ENCODE measurements at regions of chr13 and their contacts with region 1.

Region 1: GRCh38 chr13:92843549-92843948 is 383.1 kb upstream of the GPC6 start:
- DNase-seq: peak; percentile 69
- ATAC-seq: peak; percentile 39
- H3K4me3 ChIP-seq: no peak overlapping the region
- H3K27ac ChIP-seq: peak overlapping the region; percentile 29; the same call in 1 of the 2 replicates
- H3K4me1 ChIP-seq: peaks cover 2% of the 10 kb centered on the region
- H3K27me3 ChIP-seq: no peaks in the 10 kb centered on the region
- CTCF ChIP-seq: no peak
- POLR2A ChIP-seq: no peak
- RAD21 ChIP-seq: no peak

Region 2: GRCh38 chr13:92804346-92804745 is 39.2 kb before region 1 on chr13:
- CTCF ChIA-PET with region 1: no interaction called
- POLR2A ChIA-PET with region 1: no interaction called
- dilution Hi-C with region 1: no loop called
- in situ Hi-C with region 1: no loop called
- intact Hi-C with region 1: no loop called
- DNase-seq: peak; percentile 64
- ATAC-seq: peak; percentile 30; the same call in 1 of the 2 replicates
- H3K4me3 ChIP-seq: no peak overlapping the region
- H3K27ac ChIP-seq: no peak overlapping the region
- H3K4me1 ChIP-seq: no peaks in the 10 kb centered on the region
- H3K27me3 ChIP-seq: no peaks in the 10 kb centered on the region
- CTCF ChIP-seq: no peak
- POLR2A ChIP-seq: no peak
- RAD21 ChIP-seq: no peak

Region 3: GRCh38 chr13:93118081-93118615 is 274.6 kb after region 1 on chr13:
- CTCF ChIA-PET with region 1: no interaction called
- POLR2A ChIA-PET with region 1: no interaction called
- dilution Hi-C with region 1: no loop called
- in situ Hi-C with region 1: no loop called
- intact Hi-C with region 1: no loop called
- DNase-seq: no peak
- ATAC-seq: no peak
- H3K4me3 ChIP-seq: no peak overlapping the region
- H3K27ac ChIP-seq: no peak overlapping the region
- H3K4me1 ChIP-seq: no peaks in the 10 kb centered on the region
- H3K27me3 ChIP-seq: peaks cover 2% of the 10 kb centered on the region; the same call in 1 of the 2 replicates
- CTCF ChIP-seq: no peak
- POLR2A ChIP-seq: no peak
- RAD21 ChIP-seq: no peak

Region 4: DNA sequence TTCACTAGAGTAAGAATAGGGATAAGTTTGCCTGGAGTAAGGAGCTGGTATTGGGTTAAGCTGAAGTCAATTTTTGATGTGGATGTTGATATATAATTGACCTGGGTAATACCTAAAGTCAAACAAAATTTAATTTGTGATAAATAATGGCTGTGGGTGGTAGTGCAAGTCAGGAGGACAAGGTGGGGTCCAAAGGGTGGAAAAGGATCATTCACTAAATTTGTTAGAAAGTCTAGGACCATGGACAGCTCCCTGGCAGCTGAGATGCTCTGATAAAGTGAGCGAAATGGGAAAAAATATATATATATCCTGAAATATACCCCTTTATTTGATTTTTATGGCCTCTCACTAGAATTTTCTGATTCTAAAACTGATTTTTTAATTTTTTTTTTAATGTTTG is 846.6 kb after region 1 on chr13:
- CTCF ChIA-PET with region 1: no interaction called
- POLR2A ChIA-PET with region 1: no interaction called
- dilution Hi-C with region 1: no loop called
- in situ Hi-C with region 1: no loop called
- intact Hi-C with region 1: no loop called
- DNase-seq: peak; percentile 46
- ATAC-seq: peak; percentile 17; the same call in 1 of the 2 replicates
- H3K4me3 ChIP-seq: no peak overlapping the region
- H3K27ac ChIP-seq: no peak overlapping the region
- H3K4me1 ChIP-seq: no peaks in the 10 kb centered on the region
- H3K27me3 ChIP-seq: no peaks in the 10 kb centered on the region
- CTCF ChIP-seq: no peak
- POLR2A ChIP-seq: no peak
- RAD21 ChIP-seq: no peak

Region 5: GRCh38 chr13:93767917-93768409 is 924.4 kb after region 1 on chr13:
- CTCF ChIA-PET with region 1: no interaction called
- POLR2A ChIA-PET with region 1: no interaction called
- dilution Hi-C with region 1: no loop called
- in situ Hi-C with region 1: no loop called
- intact Hi-C with region 1: loop called (anchors 10 kb)
- DNase-seq: no peak
- ATAC-seq: no peak
- H3K4me3 ChIP-seq: no peak overlapping the region
- H3K27ac ChIP-seq: peak overlapping the region; percentile 97; the same call in 1 of the 2 replicates
- H3K4me1 ChIP-seq: peaks cover 7% of the 10 kb centered on the region
- H3K27me3 ChIP-seq: no peaks in the 10 kb centered on the region
- CTCF ChIP-seq: no peak
- POLR2A ChIP-seq: no peak
- RAD21 ChIP-seq: no peak

Region 6: GRCh38 chr13:94601446-94602431 is 1758.2 kb after region 1 on chr13 and contains the start of gene GPR180:
- CTCF ChIA-PET with region 1: no interaction called
- POLR2A ChIA-PET with region 1: no interaction called
- dilution Hi-C with region 1: no loop called
- in situ Hi-C with region 1: no loop called
- intact Hi-C with region 1: loop called (anchors 10 kb)
- DNase-seq: peak; percentile 100
- ATAC-seq: peak; percentile 99
- H3K4me3 ChIP-seq: peak within 1 kb of the TSS; percentile 83
- H3K27ac ChIP-seq: peak within 1 kb of the TSS; percentile 85
- H3K4me1 ChIP-seq: peaks cover 6% of the 10 kb centered on the region
- H3K27me3 ChIP-seq: no peaks in the 10 kb centered on the region
- CTCF ChIP-seq: no peak
- POLR2A ChIP-seq: peak; percentile 73
- RAD21 ChIP-seq: no peak
- total RNA-seq, gene GPR180: 10.8 and 14.2 TPM in 2 replicates

Measured in IMR-90 (cell line).